Right ventricle myocardium inferior (tissue), 1 donor: ENCODE measurements at regions of chr6 and their contacts with region 1.

Region 1: GRCh38 chr6:97282726-97283617 is at the start of gene MMS22L:
- DNase-seq: peak; percentile 96
- ATAC-seq: peak; percentile 99
- total RNA-seq, gene MMS22L: 1.9 TPM

Region 2: DNA sequence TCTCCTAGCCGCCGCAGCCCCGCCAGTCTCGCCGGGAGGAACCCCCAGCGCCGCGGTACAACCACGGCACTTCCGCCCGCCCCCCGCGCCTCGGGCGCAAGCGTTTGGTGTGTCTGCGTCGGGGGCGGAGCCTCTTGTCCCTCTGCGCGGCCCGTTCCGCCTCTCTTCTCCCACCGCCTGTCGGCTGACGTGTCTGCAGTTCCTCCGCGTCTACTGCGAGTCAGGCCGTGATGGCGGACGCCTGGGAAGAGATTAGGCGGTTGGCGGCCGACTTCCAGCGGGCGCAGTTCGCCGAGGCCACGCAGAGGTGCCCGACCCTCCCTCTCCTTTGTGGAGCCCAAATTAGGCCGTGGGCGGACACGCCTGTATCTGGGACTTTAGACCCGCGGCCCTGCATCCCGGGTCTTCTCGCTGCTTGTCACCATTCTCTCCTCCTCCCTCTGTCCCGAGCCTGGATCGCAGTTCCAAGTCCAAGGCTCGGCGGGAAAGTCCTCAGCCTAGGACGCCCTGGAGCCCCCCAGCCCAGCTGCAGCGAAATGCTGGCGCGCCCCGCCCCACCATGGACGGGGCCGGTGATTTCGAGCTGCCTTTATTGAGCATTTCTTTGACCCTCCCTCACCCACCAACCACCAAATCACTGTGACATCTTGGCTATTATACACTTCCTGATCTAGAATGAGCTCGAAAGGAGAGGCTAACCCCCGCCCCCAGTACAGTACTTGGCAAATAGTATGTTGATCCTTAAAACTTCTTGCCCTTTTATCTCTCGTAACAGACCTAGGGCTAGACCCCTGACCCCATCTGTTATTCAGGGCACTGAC is 761.1 kb before region 1 on chr6 and contains the start of gene UFL1:
- intact Hi-C with region 1: loop called (anchors 10 kb)
- DNase-seq: peak; percentile 97
- ATAC-seq: peak; percentile 99
- total RNA-seq, gene UFL1: 22.1 TPM

Region 3: GRCh38 chr6:97401533-97401932 is 118.6 kb after region 1 on chr6:
- intact Hi-C with region 1: no loop called
- DNase-seq: no peak
- ATAC-seq: no peak